ENCODE measurements at regions of chr19 and their contacts with region 1.

Region 1: GRCh38 chr19:50147462-50148423 is 15.3 kb downstream of the IZUMO2 start:
- DNase-seq: peak; percentile 90 to 96
- ATAC-seq: peak; percentile 92 to 95
- H3K4me3 ChIP-seq: peak overlapping the region; percentile 53
- H3K27ac ChIP-seq: peak overlapping the region in 1 of 2 experiments; percentile 70; a peak in 3 of 6 replicates
- H3K4me1 ChIP-seq: peaks cover 3% of the 10 kb centered on the region; the same call in 1 of the 3 replicates
- CTCF ChIP-seq: peak; percentile 89
- EP300 ChIP-seq: no peak
- POLR2A ChIP-seq: no peak
- RAD21 ChIP-seq: peak; percentile 88 to 93

Region 2: DNA sequence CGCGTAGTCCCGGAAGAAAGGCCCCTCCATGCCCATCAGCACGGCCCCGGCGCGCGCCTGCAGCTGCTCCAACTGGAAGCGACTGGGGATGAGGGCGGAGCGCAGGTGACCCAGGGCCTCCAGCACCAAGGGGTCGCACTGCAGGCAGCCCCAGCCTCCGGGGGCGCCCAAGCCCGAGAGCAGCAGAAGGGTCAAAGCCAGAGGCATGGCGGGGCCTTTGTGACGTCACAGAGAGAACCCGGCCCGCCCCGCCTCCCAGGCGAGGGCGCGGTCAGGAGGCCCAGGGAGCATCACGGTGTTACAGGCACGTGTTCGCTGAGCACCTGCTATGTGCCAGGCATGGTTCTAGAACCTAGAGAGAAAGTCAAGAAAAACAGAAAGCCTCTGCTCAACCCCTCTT is 15.2 kb after region 1 on chr19 and contains the start of gene IZUMO2:
- CTCF ChIA-PET with region 1: interaction called, 31 read pairs
- POLR2A ChIA-PET with region 1: no interaction called
- DNase-seq: no peak
- ATAC-seq: no peak
- H3K4me3 ChIP-seq: no peak within 1 kb of the TSS
- H3K27ac ChIP-seq: no peak within 1 kb of the TSS
- H3K4me1 ChIP-seq: no peaks in the 10 kb centered on the region
- CTCF ChIP-seq: no peak
- EP300 ChIP-seq: no peak
- POLR2A ChIP-seq: no peak
- RAD21 ChIP-seq: no peak
- polyA plus RNA-seq, gene IZUMO2: not detected in 2 replicates

Region 3: DNA sequence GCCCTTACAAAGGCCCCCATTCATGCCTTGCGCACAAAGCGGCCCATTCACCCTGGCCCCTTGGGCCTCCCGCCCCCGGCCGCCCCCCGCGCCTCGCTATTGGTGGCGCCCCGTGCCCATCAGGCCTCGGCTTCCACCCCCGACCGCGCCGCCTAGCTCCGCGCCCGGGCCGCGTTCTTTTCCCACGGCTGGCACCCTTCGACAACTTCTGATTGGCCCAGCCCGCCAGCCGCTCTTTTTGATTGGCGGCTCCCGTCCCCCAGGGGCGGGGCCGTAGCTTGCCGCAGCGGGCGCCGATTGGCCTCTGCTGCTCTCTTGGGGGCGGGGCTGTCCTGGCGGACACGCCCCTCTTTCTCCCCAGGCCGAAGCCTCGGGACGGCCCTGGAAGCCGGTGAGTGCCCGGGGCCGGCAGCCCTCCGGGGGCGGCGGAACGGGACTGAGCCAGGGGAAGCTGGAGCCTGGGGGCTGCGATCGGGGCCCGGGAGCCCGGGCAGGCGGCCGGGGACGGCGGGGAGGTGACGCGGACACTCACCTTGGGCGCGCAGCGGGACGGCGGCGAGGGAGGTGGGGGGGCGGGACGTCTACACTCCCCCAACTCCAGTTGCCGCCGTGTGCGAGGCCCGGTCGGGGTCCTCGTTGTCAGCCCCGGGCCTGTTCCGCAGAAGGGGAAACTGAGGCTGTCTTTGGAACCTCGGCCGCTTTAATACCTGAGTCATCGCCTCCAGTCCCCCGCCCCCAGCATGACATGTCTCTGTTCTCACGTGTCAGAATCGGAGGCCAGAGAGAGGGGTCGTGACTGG is 55.7 kb after region 1 on chr19 and contains the start of gene MYH14:
- CTCF ChIA-PET with region 1: interaction called, 10 read pairs
- POLR2A ChIA-PET with region 1: interaction called, 3 read pairs
- DNase-seq: peak; percentile 95 to 99
- ATAC-seq: peak; percentile 85 to 97
- H3K4me3 ChIP-seq: peak within 1 kb of the TSS; percentile 53
- H3K27ac ChIP-seq: peak within 1 kb of the TSS; percentile 49 to 81
- H3K4me1 ChIP-seq: 0 out of 3 replicates have a peak, but pooled peaks cover 3% of the 10 kb centered on the region
- CTCF ChIP-seq: no peak
- EP300 ChIP-seq: no peak
- POLR2A ChIP-seq: peak; percentile 34
- RAD21 ChIP-seq: no peak
- polyA plus RNA-seq, gene MYH14: 4.0 and 4.8 TPM in 2 replicates

Region 4: DNA sequence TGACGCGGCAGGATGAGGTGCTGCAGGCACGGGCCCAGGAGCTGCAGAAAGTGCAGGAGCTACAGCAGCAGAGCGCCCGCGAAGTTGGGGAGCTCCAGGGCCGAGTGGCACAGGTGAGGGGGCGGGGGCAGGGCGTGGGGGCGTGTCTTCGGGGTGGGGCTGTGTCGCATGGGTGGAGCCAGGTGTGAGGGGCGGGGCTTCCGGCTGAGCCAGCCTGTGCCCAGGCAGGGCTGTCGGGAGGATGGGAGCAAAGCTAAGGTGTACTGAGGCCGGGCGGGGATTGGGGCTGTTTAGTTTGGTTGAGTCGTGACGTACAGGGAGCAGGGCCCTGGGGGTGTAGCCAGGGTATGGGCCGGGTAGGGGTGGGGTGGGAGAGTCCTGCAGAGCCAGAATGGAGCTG is 119.2 kb after region 1 on chr19:
- CTCF ChIA-PET with region 1: interaction called, 10 read pairs
- POLR2A ChIA-PET with region 1: no interaction called
- DNase-seq: peak in 1 of 2 experiments; percentile 36
- ATAC-seq: peak; percentile 32 to 57; a peak in 4 of 6 replicates
- H3K4me3 ChIP-seq: no peak overlapping the region
- H3K27ac ChIP-seq: no peak overlapping the region
- H3K4me1 ChIP-seq: no peaks in the 10 kb centered on the region
- CTCF ChIP-seq: no peak
- EP300 ChIP-seq: no peak
- POLR2A ChIP-seq: no peak
- RAD21 ChIP-seq: no peak

Region 5: GRCh38 chr19:50315773-50316448 is 168.2 kb after region 1 on chr19:
- CTCF ChIA-PET with region 1: interaction called, 13 read pairs
- POLR2A ChIA-PET with region 1: interaction called, 3 read pairs
- DNase-seq: peak; percentile 68 to 76
- ATAC-seq: peak; percentile 49 to 77; a peak in 5 of 6 replicates
- H3K4me3 ChIP-seq: peak overlapping the region; percentile 46
- H3K27ac ChIP-seq: peak overlapping the region; percentile 70 to 82
- H3K4me1 ChIP-seq: peaks cover 23% of the 10 kb centered on the region
- CTCF ChIP-seq: no peak
- EP300 ChIP-seq: no peak
- POLR2A ChIP-seq: peak; percentile 28; the same call in 1 of the 2 replicates
- RAD21 ChIP-seq: no peak

Region 6: DNA sequence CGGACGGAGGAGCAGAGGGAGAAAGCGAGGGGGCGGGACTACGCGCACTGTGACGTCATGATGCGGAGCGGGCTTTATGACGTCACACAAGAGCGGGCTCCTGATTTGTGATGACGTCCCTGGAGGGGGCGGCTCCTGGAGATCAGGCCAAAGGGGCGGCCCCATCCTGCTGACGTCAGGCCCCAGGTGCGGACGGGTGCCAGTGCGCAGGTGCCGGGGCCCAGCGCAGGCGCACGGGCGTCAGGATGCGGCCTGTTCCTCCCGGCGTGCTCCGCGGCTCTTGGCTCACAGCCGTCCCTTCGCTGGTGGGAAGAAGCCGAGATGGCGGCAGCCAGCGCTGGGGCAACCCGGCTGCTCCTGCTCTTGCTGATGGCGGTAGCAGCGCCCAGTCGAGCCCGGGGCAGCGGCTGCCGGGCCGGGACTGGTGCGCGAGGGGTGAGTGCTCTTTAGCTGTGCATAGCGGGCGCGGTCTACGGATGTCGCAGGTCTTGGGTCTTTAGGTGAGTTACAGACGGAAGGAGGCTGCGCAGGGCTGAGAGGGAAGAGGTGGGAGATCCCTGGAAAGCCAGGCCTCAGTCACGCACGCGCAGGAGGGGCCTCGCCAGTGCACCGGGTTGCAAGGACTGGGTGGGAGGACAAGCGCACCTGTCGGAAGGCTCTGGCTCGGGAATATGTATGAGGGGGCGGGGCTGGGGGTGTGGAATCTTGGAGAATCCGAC is 328.6 kb after region 1 on chr19 and contains the starts of genes EMC10 and GARIN5A:
- CTCF ChIA-PET with region 1: interaction called, 10 read pairs
- POLR2A ChIA-PET with region 1: no interaction called
- DNase-seq: peak; percentile 99
- ATAC-seq: peak; percentile 73 to 91
- H3K4me3 ChIP-seq: peak within 1 kb of the TSS; percentile 86
- H3K27ac ChIP-seq: peak within 1 kb of the TSS; percentile 87 to 93
- H3K4me1 ChIP-seq: peaks cover 12% of the 10 kb centered on the region
- CTCF ChIP-seq: no peak
- EP300 ChIP-seq: no peak
- POLR2A ChIP-seq: peak; percentile 96
- RAD21 ChIP-seq: no peak
- polyA plus RNA-seq, gene EMC10: 52.8 and 54.0 TPM in 2 replicates
- polyA plus RNA-seq, gene GARIN5A: 0.57 and 1.1 TPM in 2 replicates

Measured in A549 (cell line).